ENCODE measurements at regions of chr6 and their contacts with region 1.

Region 1: DNA sequence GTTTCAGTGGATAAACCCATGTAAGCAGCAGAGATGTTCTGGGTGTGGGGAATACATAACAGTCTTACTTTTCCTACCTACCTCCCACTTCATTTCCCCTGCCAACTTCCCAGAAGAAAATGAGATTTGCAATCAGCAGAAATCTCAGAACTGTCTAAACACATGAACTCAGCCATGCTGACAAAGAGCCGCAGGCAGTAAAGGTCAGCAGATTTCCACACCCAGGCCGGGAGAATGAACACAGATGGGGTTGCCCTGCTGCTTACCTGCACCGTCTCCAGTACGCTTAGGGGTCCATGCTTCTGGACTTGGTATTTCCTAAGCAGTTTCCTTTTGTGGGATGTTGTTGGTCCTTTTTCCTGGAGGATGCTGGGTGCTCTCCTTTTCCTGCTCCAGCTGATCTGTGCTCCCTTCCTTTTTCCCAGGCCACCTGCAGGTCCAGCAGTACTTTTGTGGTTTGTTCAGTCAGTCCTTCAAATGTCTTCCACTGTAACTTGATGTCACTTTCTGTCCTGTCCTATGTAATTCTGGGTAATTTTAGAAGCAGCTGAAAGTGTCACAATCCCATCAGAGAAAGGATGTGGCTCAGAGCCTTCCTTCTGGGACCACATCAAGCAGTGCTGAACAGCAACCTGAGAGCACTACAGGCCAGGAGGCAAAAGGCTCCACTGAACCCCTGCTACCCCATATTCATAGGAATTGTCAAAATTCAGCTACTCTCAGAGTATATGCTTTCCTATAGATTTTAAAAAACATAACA is 129.0 kb downstream of the CEP57L1 start:
- DNase-seq: no peak
- ATAC-seq: no peak
- H3K4me3 ChIP-seq: no peak overlapping the region
- H3K27ac ChIP-seq: no peak overlapping the region
- H3K4me1 ChIP-seq: no peaks in the 10 kb centered on the region
- H3K27me3 ChIP-seq: peaks cover 29% of the 10 kb centered on the region
- CTCF ChIP-seq: no peak
- POLR2A ChIP-seq: no peak
- RAD21 ChIP-seq: no peak

Region 2: GRCh38 chr6:109255946-109256640 is 31.8 kb after region 1 on chr6:
- CTCF ChIA-PET with region 1: no interaction called
- POLR2A ChIA-PET with region 1: no interaction called
- dilution Hi-C with region 1: no loop called
- in situ Hi-C with region 1: no loop called
- intact Hi-C with region 1: loop called (anchors 5 kb)
- DNase-seq: no peak
- ATAC-seq: no peak
- H3K4me3 ChIP-seq: no peak overlapping the region
- H3K27ac ChIP-seq: no peak overlapping the region
- H3K4me1 ChIP-seq: peaks cover 10% of the 10 kb centered on the region
- H3K27me3 ChIP-seq: peaks cover 6% of the 10 kb centered on the region
- CTCF ChIP-seq: no peak
- POLR2A ChIP-seq: no peak
- RAD21 ChIP-seq: no peak

Measured in IMR-90 (cell line).